ENCODE measurements at regions of chr11 and their contacts with region 1.

Region 1: DNA sequence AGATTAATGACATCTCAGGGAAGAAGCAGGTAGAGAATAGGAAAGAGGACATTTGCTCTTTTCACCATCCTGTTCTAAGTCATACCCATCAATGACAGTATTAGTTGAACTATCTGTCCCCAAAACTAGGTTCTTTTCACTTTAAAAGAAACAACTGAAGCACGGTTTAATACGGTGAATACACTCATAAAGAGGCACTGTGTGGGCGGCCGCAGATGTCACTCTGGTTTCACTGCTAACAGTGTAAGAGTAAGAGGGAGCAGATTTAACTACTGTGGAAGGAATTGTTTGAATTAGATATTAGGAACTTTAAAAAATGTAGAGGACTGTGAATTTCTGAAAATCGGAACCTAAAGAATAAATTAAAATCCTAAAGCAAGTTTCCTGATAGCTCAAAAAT is 49.5 kb downstream of the VSIG10L2 start:
- DNase-seq: no peak
- ATAC-seq: no peak
- H3K4me3 ChIP-seq: no peak overlapping the region
- H3K27ac ChIP-seq: no peak overlapping the region
- H3K4me1 ChIP-seq: no peaks in the 10 kb centered on the region
- H3K27me3 ChIP-seq: no peaks in the 10 kb centered on the region
- CTCF ChIP-seq: no peak

Region 2: GRCh38 chr11:125625630-125626287 is 369.6 kb before region 1 on chr11:
- CTCF ChIA-PET with region 1: interaction called, 10 read pairs
- POLR2A ChIA-PET with region 1: no interaction called
- in situ Hi-C with region 1: no loop called
- intact Hi-C with region 1: no loop called
- DNase-seq: peak; percentile 85
- ATAC-seq: peak; percentile 92
- H3K4me3 ChIP-seq: peak overlapping the region; percentile 67 to 74
- H3K27ac ChIP-seq: peak overlapping the region; percentile 87
- H3K4me1 ChIP-seq: peaks cover 29% of the 10 kb centered on the region
- H3K27me3 ChIP-seq: no peaks in the 10 kb centered on the region
- CTCF ChIP-seq: no peak

Region 3: DNA sequence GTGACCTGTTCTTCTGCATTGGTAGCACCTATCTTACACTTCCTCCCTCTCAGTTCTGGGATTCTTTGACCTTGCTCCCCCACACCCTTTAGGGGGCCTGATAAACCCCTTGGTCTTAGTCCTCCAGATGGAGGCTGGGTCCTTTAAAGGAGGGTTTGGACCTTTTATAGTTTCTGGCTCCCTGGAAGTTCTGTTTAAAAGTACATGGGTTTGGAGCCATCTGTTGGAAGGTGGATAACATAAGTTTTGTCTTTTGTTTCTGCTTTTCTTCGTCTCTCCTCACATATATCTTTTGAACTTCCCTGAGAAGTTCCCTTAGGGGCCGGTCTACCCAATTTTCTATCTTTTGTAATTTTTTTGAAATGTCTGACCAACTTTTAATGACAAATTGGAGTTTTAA is 125.8 kb before region 1 on chr11:
- CTCF ChIA-PET with region 1: no interaction called
- POLR2A ChIA-PET with region 1: no interaction called
- in situ Hi-C with region 1: no loop called
- intact Hi-C with region 1: no loop called
- DNase-seq: no peak
- ATAC-seq: no peak
- H3K4me3 ChIP-seq: no peak overlapping the region
- H3K27ac ChIP-seq: no peak overlapping the region
- H3K4me1 ChIP-seq: no peaks in the 10 kb centered on the region
- H3K27me3 ChIP-seq: no peaks in the 10 kb centered on the region
- CTCF ChIP-seq: peak; percentile 21; the same call in 1 of the 2 replicates

Region 4: GRCh38 chr11:125949271-125950177 is 45.8 kb before region 1 on chr11:
- CTCF ChIA-PET with region 1: interaction called, 12 read pairs
- POLR2A ChIA-PET with region 1: no interaction called
- in situ Hi-C with region 1: no loop called
- intact Hi-C with region 1: no loop called
- DNase-seq: no peak
- ATAC-seq: no peak
- H3K4me3 ChIP-seq: no peak overlapping the region
- H3K27ac ChIP-seq: no peak overlapping the region
- H3K4me1 ChIP-seq: no peaks in the 10 kb centered on the region
- H3K27me3 ChIP-seq: no peaks in the 10 kb centered on the region
- CTCF ChIP-seq: no peak

Region 5: DNA sequence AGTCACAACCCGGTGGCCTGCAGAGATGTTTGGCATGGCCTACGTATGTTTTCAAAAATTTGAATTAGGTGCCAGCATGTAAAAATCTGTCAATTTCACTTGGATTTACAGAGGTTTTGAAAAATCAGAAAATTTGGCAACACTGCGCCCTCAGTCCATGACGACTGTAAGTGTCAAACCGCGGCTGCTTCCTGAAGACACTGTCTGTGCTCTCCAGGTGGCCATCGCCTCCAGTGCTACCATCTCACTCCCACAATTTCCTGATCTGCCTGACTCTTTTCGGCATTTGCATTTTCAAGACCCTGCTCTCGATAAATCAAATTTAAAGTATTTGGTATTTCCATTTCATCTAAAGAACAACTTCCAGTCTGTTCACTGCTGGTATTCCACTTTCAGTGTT is 14.9 kb before region 1 on chr11:
- CTCF ChIA-PET with region 1: no interaction called
- POLR2A ChIA-PET with region 1: no interaction called
- in situ Hi-C with region 1: no loop called
- intact Hi-C with region 1: no loop called
- DNase-seq: no peak
- ATAC-seq: no peak
- H3K4me3 ChIP-seq: no peak overlapping the region
- H3K27ac ChIP-seq: no peak overlapping the region
- H3K4me1 ChIP-seq: no peaks in the 10 kb centered on the region
- H3K27me3 ChIP-seq: no peaks in the 10 kb centered on the region
- CTCF ChIP-seq: no peak

Region 6: DNA sequence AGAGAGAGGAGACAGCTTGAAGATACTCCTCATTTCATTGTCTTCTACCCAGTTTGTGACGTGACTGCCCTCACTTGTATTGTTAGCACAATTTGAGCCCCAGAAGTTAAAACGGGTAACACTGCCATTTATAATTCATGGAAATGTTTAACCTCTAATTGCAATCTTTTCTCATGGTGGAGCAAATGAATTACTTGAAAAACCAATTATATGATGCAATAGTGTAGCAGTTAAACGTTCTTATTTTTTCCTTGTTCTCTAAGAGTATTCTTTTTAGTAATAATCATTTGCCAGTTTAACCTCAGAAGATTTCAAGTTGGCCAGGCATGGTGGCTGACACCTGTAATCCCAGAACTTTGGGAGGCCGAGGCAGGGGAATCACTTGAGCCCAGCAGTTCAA is 10.8 kb after region 1 on chr11:
- CTCF ChIA-PET with region 1: no interaction called
- POLR2A ChIA-PET with region 1: interaction called, 23 read pairs
- in situ Hi-C with region 1: no loop called
- intact Hi-C with region 1: no loop called
- DNase-seq: no peak
- ATAC-seq: no peak
- H3K4me3 ChIP-seq: no peak overlapping the region
- H3K27ac ChIP-seq: no peak overlapping the region
- H3K4me1 ChIP-seq: peaks cover 7% of the 10 kb centered on the region
- H3K27me3 ChIP-seq: no peaks in the 10 kb centered on the region; the same call in 1 of the 2 replicates
- CTCF ChIP-seq: no peak

Measured in Panc1 (cell line).